ENCODE measurements at regions of chr6 and their contacts with region 1.

Region 1: DNA sequence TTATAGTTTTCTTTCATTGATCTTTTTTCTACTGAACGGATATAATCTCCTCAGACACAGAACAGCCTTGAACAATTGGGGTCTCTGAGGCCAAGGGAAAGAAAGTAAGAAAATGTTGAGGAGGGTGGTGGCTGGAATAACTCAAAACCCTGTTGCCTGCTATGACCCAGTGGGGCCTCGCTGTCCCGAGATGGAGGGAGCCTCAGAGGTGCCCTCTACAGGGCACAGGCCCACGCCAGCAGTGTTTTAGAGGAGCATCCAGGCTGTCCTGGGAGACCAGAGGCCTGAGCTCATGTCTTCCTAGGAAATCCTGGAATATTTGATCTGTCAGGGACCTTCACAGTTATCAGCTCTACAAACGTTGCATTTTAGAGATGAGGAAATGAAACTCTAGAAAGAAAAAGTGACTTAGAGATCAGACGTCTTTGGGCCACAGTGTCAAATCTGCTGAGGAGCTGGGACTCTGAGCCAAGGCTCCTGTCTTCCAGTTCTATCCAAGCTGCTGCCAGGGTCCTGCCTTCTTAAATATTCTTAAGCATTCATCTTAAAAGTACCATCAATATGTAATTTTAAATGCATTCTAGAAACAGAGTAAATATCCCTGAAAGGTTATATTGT is 26.3 kb downstream of the ALDH5A1 start:
- DNase-seq: peak; percentile 59
- CTCF ChIP-seq: peak; percentile 76

Region 2: GRCh38 chr6:24537771-24538385 is 16.8 kb after region 1 on chr6:
- CTCF ChIA-PET with region 1: interaction called, 29 read pairs
- POLR2A ChIA-PET with region 1: no interaction called
- DNase-seq: no peak
- CTCF ChIP-seq: no peak

Region 3: GRCh38 chr6:24543683-24544082 is 22.6 kb after region 1 on chr6:
- CTCF ChIA-PET with region 1: interaction called, 18 read pairs
- POLR2A ChIA-PET with region 1: no interaction called
- DNase-seq: no peak
- CTCF ChIP-seq: no peak

Region 4: DNA sequence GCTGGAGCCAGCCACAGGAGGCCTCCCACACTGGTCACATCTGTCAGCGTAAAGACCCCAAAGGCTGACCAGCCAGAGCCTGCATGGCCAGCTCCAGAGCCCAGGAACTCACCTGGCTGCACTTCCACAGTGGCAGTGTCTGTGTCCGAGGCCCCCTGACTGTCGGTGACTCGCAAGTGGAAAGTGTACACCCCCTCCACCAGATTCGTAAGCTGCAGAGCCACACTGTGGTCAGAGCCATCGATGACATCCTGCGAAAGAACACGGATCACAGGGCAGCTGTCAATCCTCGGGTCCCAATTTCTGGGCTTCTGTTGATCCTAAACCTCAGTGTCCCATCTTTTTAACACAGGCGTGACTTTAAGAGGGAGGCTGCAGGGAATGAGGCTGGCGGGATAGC is 43.1 kb after region 1 on chr6:
- CTCF ChIA-PET with region 1: interaction called, 10 read pairs
- POLR2A ChIA-PET with region 1: no interaction called
- DNase-seq: no peak
- CTCF ChIP-seq: no peak